ENCODE measurements at regions of chr12 and their contacts with region 1.

Region 1: GRCh38 chr12:70733385-70733784 is 96.2 kb upstream of the PTPRB start:
- DNase-seq: peak; percentile 63
- ATAC-seq: peak; percentile 80
- H3K4me3 ChIP-seq: no peak overlapping the region
- H3K27ac ChIP-seq: no peak overlapping the region
- H3K4me1 ChIP-seq: no peaks in the 10 kb centered on the region
- H3K27me3 ChIP-seq: no peaks in the 10 kb centered on the region
- CTCF ChIP-seq: peak; percentile 71
- EP300 ChIP-seq: no peak
- POLR2A ChIP-seq: no peak
- RAD21 ChIP-seq: 0 out of 2 replicates have a peak, but pooled peaks have one; percentile 18

Region 2: DNA sequence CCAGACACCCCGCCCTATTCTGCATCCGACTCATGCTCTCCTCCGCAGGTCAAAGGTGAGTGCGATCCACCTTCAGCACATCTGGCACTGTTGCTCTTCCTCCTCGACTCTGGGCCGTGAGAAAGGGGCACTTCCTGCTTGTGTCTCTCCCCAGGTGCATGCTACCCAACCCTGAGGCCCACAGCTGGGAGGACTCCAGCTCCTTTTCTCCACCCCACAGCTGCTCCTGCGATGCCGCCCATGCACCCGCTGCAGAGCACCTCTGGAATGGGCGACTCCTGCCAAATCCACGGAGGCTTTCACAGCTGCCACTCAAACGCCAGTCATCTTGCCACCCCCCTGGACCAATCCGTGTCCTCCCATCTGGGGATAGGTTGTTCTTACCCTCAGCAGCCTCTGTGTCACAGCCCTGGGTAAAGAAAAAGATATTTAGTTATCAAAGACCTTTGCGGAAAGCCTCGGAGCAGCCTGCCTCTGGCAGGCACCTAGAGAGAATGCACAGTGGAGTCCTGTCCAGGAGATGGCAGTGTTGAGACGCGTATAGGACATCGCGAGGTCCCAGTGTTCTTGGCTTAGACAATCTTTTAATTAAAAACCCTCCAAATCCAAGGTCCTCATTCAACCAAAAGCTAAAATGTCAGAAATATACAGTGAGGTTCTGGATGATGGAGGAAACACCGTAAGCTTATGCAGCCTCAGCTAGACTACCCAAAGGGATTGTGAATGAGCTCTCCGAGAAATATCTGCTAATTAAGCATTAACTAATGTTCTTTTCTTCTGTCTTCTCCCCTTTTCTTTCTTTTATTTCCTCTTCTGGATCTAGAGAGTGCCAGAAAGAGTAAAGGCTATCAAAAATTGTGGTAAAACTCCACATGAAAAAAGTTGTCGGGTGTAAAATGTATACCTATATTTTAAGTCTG is 854.1 kb before region 1 on chr12:
- CTCF ChIA-PET with region 1: interaction called, 3 read pairs
- POLR2A ChIA-PET with region 1: no interaction called
- in situ Hi-C with region 1: loop called (anchors 5 kb)
- intact Hi-C with region 1: loop called (anchors 2 kb)
- DNase-seq: peak; percentile 51
- ATAC-seq: peak; percentile 97
- H3K4me3 ChIP-seq: no peak overlapping the region
- H3K27ac ChIP-seq: no peak overlapping the region
- H3K4me1 ChIP-seq: no peaks in the 10 kb centered on the region
- H3K27me3 ChIP-seq: peaks cover 0 to 13% of the 10 kb centered on the region in 2 experiments; a peak in 2 of 5 replicates
- CTCF ChIP-seq: peak; percentile 84
- EP300 ChIP-seq: no peak
- POLR2A ChIP-seq: no peak
- RAD21 ChIP-seq: peak; percentile 76

Region 3: GRCh38 chr12:70590051-70590450 is 143.3 kb before region 1 on chr12:
- CTCF ChIA-PET with region 1: interaction called, 10 read pairs
- POLR2A ChIA-PET with region 1: no interaction called
- in situ Hi-C with region 1: no loop called
- intact Hi-C with region 1: loop called (anchors 1 kb)
- DNase-seq: peak; percentile 49
- ATAC-seq: peak; percentile 94
- H3K4me3 ChIP-seq: no peak overlapping the region
- H3K27ac ChIP-seq: no peak overlapping the region
- H3K4me1 ChIP-seq: no peaks in the 10 kb centered on the region
- H3K27me3 ChIP-seq: no peaks in the 10 kb centered on the region
- CTCF ChIP-seq: peak; percentile 84
- EP300 ChIP-seq: no peak
- POLR2A ChIP-seq: no peak
- RAD21 ChIP-seq: peak; percentile 55; the same call in 1 of the 2 replicates

Region 4: GRCh38 chr12:70849265-70849960 is 116.0 kb after region 1 on chr12:
- CTCF ChIA-PET with region 1: interaction called, 10 read pairs
- POLR2A ChIA-PET with region 1: no interaction called
- in situ Hi-C with region 1: loop called (anchors 5 kb)
- intact Hi-C with region 1: loop called (anchors 1 kb)
- DNase-seq: peak; percentile 2
- ATAC-seq: no peak
- H3K4me3 ChIP-seq: no peak overlapping the region
- H3K27ac ChIP-seq: no peak overlapping the region
- H3K4me1 ChIP-seq: no peaks in the 10 kb centered on the region
- H3K27me3 ChIP-seq: no peaks in the 10 kb centered on the region
- CTCF ChIP-seq: 0 out of 2 replicates have a peak, but pooled peaks have one; percentile 13
- EP300 ChIP-seq: no peak
- POLR2A ChIP-seq: no peak
- RAD21 ChIP-seq: no peak

Region 5: DNA sequence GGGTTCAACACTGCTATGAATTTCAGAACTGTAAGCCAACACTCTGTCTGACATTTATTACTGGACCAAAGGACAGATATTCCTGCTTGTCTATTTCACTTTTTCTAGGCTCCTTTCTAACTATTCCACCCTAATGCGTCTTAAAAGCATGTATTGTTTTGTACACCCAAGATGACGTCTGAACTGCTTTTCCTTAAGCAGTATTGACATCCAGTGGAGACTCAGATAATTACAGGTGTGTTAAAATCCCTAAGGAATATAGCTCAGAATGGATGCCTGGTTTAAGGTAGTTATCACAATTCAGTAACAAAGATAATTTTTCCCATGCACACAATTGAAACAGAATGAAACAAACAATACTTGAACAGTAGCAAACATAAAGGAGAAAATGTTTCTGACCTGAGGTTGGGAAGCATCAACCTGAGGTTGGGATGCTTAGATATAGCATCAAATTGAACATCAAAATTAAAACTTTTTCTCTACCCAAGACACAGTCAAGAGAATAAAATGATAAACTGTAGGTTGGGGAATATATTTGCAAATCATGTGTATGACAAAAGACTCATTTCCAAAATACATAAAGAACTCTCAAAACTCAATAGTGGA is 280.9 kb after region 1 on chr12:
- CTCF ChIA-PET with region 1: no interaction called
- POLR2A ChIA-PET with region 1: no interaction called
- in situ Hi-C with region 1: loop called (anchors 25 kb)
- intact Hi-C with region 1: loop called (anchors 1 kb)
- DNase-seq: peak; percentile 5
- ATAC-seq: peak; percentile 41; the same call in 1 of the 3 replicates
- H3K4me3 ChIP-seq: no peak overlapping the region
- H3K27ac ChIP-seq: no peak overlapping the region
- H3K4me1 ChIP-seq: no peaks in the 10 kb centered on the region
- H3K27me3 ChIP-seq: no peaks in the 10 kb centered on the region
- CTCF ChIP-seq: peak; percentile 46
- EP300 ChIP-seq: no peak
- POLR2A ChIP-seq: no peak
- RAD21 ChIP-seq: no peak

Region 6: DNA sequence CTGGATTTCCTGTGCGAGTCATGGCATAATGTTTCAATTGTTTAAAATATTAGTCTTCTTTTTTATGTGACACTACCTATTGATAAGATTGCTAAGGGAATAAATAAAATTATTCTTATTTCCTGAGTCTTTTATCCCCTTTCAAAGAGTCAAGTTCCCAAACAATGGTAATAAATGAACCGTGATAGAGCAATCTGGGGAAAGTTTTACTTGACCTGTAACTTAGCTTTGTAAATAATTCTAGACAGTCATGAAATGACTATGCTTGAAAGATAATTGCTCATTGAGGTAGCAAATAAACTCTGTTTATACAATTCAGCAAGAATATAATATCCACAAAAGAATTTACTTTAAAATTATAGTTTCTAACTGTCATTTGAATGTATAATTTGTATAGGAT is 342.4 kb after region 1 on chr12:
- CTCF ChIA-PET with region 1: no interaction called
- POLR2A ChIA-PET with region 1: no interaction called
- in situ Hi-C with region 1: no loop called
- intact Hi-C with region 1: no loop called
- DNase-seq: no peak
- ATAC-seq: no peak
- H3K4me3 ChIP-seq: no peak overlapping the region
- H3K27ac ChIP-seq: no peak overlapping the region
- H3K4me1 ChIP-seq: no peaks in the 10 kb centered on the region
- H3K27me3 ChIP-seq: 0 out of 5 replicates have a peak, but pooled peaks cover 0 to 3% of the 10 kb centered on the region in 2 experiments
- CTCF ChIP-seq: no peak
- EP300 ChIP-seq: no peak
- POLR2A ChIP-seq: no peak
- RAD21 ChIP-seq: no peak

Region 7: GRCh38 chr12:71371122-71371521 is 637.7 kb after region 1 on chr12:
- CTCF ChIA-PET with region 1: no interaction called
- POLR2A ChIA-PET with region 1: no interaction called
- in situ Hi-C with region 1: no loop called
- intact Hi-C with region 1: loop called (anchors 1 kb)
- DNase-seq: peak; percentile 16
- ATAC-seq: peak; percentile 59; the same call in 2 of the 3 replicates
- H3K4me3 ChIP-seq: no peak overlapping the region
- H3K27ac ChIP-seq: no peak overlapping the region
- H3K4me1 ChIP-seq: no peaks in the 10 kb centered on the region
- H3K27me3 ChIP-seq: no peaks in the 10 kb centered on the region
- CTCF ChIP-seq: peak; percentile 55
- EP300 ChIP-seq: no peak
- POLR2A ChIP-seq: no peak
- RAD21 ChIP-seq: no peak

Region 8: DNA sequence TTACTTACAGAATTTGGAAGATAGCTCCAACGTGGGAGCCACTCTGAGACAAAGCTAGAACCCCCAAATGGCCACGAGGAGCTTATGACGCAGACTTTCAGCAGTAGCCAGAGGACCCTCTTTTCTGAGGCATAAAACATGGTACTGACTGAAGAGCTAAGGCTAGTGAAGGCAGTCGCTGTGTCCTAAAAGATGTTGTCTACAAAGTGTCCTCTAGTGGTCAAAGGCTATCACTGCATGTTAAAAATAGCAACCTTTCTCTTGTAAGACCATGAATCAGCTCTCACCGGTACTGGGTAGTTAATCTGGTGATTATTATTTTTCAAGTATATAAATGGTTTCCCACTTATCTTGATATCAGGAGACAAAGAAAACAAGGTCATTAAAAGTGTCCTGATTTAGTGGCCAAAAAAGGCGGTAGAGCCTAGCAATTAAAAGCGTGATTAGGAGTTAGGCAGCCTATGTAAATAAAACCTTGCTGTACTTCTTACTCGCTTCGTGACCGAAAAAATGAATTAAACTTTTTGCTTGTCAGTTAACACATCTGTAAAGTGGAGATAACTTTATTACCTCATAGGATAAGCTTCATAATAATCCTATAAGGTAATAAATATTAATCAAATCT is 659.2 kb after region 1 on chr12:
- CTCF ChIA-PET with region 1: interaction called, 6 read pairs
- POLR2A ChIA-PET with region 1: no interaction called
- in situ Hi-C with region 1: no loop called
- intact Hi-C with region 1: loop called (anchors 2 kb)
- DNase-seq: peak; percentile 69
- ATAC-seq: peak; percentile 90
- H3K4me3 ChIP-seq: no peak overlapping the region; a peak in 1 of 6 replicates
- H3K27ac ChIP-seq: no peak overlapping the region
- H3K4me1 ChIP-seq: no peaks in the 10 kb centered on the region
- H3K27me3 ChIP-seq: no peaks in the 10 kb centered on the region; a peak in 1 of 5 replicates
- CTCF ChIP-seq: peak; percentile 85
- EP300 ChIP-seq: no peak
- POLR2A ChIP-seq: no peak
- RAD21 ChIP-seq: 0 out of 2 replicates have a peak, but pooled peaks have one; percentile 44

Measured in HepG2 (cell line).